Heart right ventricle (tissue), 16 donors: ENCODE measurements at regions of chr2 and their contacts with region 1.

Region 1: DNA sequence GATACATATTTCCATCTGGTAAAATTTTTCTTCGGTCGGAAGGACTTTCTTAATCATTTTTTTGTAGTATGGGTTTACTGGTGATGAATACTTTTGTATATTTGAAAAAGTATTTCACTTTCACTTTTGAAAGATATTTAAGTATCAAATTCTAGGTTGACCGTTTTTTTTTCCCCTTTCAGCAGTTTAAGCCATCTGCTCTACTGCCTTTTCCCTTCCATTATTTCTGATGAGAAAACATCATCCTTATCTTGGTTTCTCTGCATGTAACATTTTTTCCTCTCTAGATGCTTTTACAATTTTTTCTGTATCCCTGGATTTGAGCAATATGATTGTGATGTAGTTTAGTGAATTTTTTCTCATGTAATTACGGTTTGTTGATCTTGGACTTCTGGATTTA is 87.0 kb downstream of the MTX2 start:
- DNase-seq: no peak
- ATAC-seq: no peak
- H3K4me3 ChIP-seq: no peak overlapping the region
- H3K27ac ChIP-seq: no peak overlapping the region
- H3K4me1 ChIP-seq: no peaks in the 10 kb centered on the region
- H3K27me3 ChIP-seq: no peaks in the 10 kb centered on the region
- CTCF ChIP-seq: no peak

Region 2: GRCh38 chr2:176261136-176261535 is 95.1 kb before region 1 on chr2:
- intact Hi-C with region 1: no loop called
- DNase-seq: no peak
- ATAC-seq: no peak
- H3K4me3 ChIP-seq: no peak overlapping the region
- H3K27ac ChIP-seq: no peak overlapping the region
- H3K4me1 ChIP-seq: peaks cover 0 to 7% (median 0%) of the 10 kb centered on the region in 9 donors
- H3K27me3 ChIP-seq: peaks cover 0 to 6% (median under 1%) of the 10 kb centered on the region in 7 donors
- CTCF ChIP-seq: no peak

Region 3: DNA sequence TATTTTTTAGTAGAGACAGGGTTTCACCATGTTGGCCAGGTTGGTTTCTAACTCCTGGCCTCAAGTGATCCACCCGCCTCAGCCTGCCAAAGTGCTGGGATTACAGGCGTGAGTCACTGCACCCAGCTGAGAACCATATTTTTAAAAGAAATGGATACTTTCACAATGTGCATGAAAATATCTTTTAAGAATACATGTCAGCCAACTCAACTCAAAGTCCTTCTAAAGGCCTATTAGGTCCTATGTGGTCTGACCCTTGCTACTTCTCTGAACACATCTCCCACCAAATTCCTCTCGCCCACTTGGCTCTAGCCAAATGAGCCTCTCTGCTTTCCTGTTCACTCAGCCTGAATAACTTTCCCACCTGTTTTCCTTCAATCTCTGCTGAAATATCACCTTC is 32.6 kb after region 1 on chr2:
- intact Hi-C with region 1: loop called in 1 of 10 experiments (anchors 2 kb)
- DNase-seq: no peak
- ATAC-seq: no peak
- H3K4me3 ChIP-seq: no peak overlapping the region
- H3K27ac ChIP-seq: no peak overlapping the region
- H3K4me1 ChIP-seq: peaks cover 0 to 34% (median 13%) of the 10 kb centered on the region in 9 donors
- H3K27me3 ChIP-seq: peaks cover 0 to 5% (median 0%) of the 10 kb centered on the region in 7 donors
- CTCF ChIP-seq: no peak